Head of caudate nucleus (tissue), 42 donors: ENCODE measurements at regions of chr15 and their contacts with region 1.

Region 1: GRCh38 chr15:42920519-42921227 is at the start of gene TTBK2:
- DNase-seq: peak; percentile 97 to 100 (median 99)

Region 2: DNA sequence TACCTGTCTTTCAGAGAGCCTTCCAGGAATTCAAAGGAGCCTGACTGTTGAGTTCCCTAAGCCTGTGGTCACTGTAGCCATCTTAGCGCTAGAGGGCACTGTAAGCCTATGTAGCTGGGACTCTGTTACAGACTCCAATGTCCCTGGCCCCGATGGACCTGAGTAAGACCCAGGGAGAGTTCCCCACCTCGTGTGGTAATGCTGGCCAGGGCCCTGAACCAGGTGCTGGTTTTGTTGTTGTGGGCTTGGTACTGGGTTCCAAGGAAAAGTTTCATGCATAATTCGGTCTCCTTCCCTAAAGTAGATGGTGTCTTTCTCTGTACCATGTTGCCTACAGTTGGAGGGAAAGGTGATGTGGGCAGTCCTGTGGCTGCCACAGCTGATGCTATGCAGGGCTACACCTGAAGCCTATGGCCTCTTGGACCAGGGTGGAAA is 216.2 kb before region 1 on chr15:
- intact Hi-C with region 1: loop called (anchors 10 kb)
- DNase-seq: peak in 40 of 42 donors; percentile 15 to 86 (median 64)

Region 3: GRCh38 chr15:42736793-42737528 is 183.7 kb before region 1 on chr15 and contains the start of gene CDAN1:
- intact Hi-C with region 1: loop called (anchors 5 kb)
- DNase-seq: peak; percentile 69 to 95 (median 90)